CD4-positive, alpha-beta T cell (primary cell): ENCODE measurements at regions of chr4 and their contacts with region 1.

Region 1: DNA sequence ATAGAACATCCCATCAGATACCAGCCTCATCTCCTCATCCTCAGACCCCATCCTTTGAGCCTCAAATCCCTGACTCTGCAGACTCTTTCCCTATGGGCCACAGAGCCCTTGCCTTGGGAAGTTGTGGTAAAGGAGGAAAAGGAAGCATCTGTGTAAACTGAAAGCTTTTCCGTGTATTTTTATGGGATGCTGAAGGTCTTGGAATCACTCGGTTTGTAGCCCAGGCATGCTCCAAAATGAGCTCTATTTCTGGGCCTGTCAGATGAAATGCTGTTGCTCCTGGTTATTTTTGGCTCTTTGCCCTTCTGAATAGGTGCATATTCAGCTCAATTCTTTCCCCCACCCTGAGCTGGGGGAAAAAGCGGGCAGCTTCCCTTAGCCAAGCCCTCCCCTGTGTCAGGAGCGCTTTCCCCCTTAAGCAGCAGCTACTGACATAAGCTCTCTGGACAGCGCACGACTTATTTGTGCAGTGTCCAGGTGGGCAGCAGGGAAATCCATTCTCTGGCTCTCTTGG is 5.0 kb upstream of the SEL1L3 start:
- DNase-seq: no peak
- ATAC-seq: no peak
- H3K4me3 ChIP-seq: no peak overlapping the region
- H3K4me3 Mint-ChIP-seq: no peak overlapping the region
- H3K27ac ChIP-seq: no peak overlapping the region
- H3K27ac Mint-ChIP-seq: no peak overlapping the region
- H3K4me1 ChIP-seq: peaks cover 11% of the 10 kb centered on the region
- H3K4me1 Mint-ChIP-seq: no peaks in the 10 kb centered on the region
- H3K27me3 ChIP-seq: no peaks in the 10 kb centered on the region
- H3K27me3 Mint-ChIP-seq: no peaks in the 10 kb centered on the region
- CTCF ChIP-seq: no peak

Region 2: GRCh38 chr4:25563071-25563564 is 304.7 kb before region 1 on chr4:
- CTCF ChIA-PET with region 1: no interaction called
- POLR2A ChIA-PET with region 1: no interaction called
- intact Hi-C with region 1: no loop called
- DNase-seq: no peak
- ATAC-seq: no peak
- H3K4me3 ChIP-seq: no peak overlapping the region
- H3K4me3 Mint-ChIP-seq: no peak overlapping the region
- H3K27ac ChIP-seq: no peak overlapping the region
- H3K27ac Mint-ChIP-seq: no peak overlapping the region
- H3K4me1 ChIP-seq: no peaks in the 10 kb centered on the region
- H3K4me1 Mint-ChIP-seq: no peaks in the 10 kb centered on the region
- H3K27me3 ChIP-seq: no peaks in the 10 kb centered on the region
- H3K27me3 Mint-ChIP-seq: peaks cover 3% of the 10 kb centered on the region
- CTCF ChIP-seq: no peak

Region 3: DNA sequence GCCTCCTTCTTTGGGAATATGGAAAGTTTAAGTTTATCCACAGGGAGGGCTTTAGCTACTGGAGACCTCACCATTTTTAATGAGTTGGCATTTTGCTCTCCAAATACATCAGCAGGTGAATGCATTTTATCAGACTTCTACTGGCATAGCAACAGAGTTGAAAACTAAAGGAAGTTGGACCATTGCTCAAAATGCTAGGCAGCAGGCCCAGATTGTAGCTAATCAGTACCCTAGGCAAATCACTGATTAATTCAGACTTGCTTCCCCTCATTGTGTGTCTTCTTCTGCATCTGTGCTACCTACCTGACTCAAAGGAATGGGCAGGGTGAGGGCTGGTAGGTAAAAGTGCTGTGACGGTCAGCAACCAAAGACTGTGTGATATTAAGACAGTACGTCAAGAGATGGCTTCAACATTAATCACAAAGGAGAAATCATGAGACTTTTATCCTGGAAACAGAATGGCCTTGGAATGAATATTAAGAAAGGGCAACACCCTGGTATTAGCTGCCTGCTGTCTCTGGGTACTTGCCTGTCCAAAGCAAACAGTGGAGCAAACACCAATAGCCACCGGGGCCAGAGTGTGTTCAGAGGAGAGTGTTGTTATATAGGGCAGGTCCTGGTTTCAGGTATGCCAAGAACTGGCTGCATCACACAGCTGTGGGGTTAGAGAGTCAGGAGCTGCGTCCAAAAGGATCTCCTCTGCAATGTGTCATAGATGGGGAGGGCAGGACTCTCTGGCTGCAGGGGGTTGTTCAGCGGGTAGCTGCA is 29.1 kb after region 1 on chr4:
- CTCF ChIA-PET with region 1: no interaction called
- POLR2A ChIA-PET with region 1: no interaction called
- intact Hi-C with region 1: loop called in 1 of 2 experiments (anchors 2 kb)
- DNase-seq: no peak
- ATAC-seq: no peak
- H3K4me3 ChIP-seq: no peak overlapping the region
- H3K4me3 Mint-ChIP-seq: no peak overlapping the region
- H3K27ac ChIP-seq: no peak overlapping the region
- H3K27ac Mint-ChIP-seq: no peak overlapping the region
- H3K4me1 ChIP-seq: no peaks in the 10 kb centered on the region
- H3K4me1 Mint-ChIP-seq: no peaks in the 10 kb centered on the region
- H3K27me3 ChIP-seq: no peaks in the 10 kb centered on the region
- H3K27me3 Mint-ChIP-seq: no peaks in the 10 kb centered on the region
- CTCF ChIP-seq: no peak

Region 4: GRCh38 chr4:26473893-26474292 is 606.1 kb after region 1 on chr4:
- CTCF ChIA-PET with region 1: no interaction called
- POLR2A ChIA-PET with region 1: no interaction called
- intact Hi-C with region 1: no loop called
- DNase-seq: no peak
- ATAC-seq: no peak
- H3K4me3 ChIP-seq: no peak overlapping the region
- H3K4me3 Mint-ChIP-seq: no peak overlapping the region
- H3K27ac ChIP-seq: no peak overlapping the region
- H3K27ac Mint-ChIP-seq: no peak overlapping the region
- H3K4me1 ChIP-seq: no peaks in the 10 kb centered on the region
- H3K4me1 Mint-ChIP-seq: no peaks in the 10 kb centered on the region
- H3K27me3 ChIP-seq: peaks cover 0 to 4% of the 10 kb centered on the region in 2 experiments
- H3K27me3 Mint-ChIP-seq: no peaks in the 10 kb centered on the region
- CTCF ChIP-seq: no peak